K562 (cell line): ENCODE measurements at regions of chr2 and their contacts with region 1.

Region 1: DNA sequence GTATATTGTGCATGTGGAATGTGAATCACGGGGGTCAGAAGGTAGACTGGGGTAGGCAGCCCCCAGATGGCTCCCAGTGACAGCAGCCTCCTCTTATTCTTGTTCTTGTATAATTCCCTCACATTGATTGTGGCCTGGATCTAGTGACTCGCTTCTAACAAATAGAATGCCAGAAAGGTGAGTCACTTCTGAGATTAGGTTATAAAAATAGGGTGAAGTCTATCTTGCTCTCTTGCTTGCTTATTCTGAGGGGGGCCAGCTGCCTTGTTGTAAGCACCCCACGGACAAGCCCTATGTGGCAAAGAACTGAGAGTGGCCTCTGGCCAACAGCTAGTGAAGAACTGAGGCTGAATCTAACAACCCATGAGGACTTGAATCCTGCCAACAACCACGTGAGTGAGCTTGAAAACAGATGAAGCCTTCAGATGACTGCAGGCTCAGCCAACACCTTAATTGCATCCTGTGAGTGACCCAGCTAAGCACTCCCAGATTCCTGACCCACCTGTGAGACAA is 15.6 kb upstream of the RMND5A start:
- DNase-seq: no peak
- ATAC-seq: no peak
- H3K4me3 ChIP-seq: no peak overlapping the region
- H3K27ac ChIP-seq: no peak overlapping the region
- H3K4me1 ChIP-seq: peaks cover 0 to 7% of the 10 kb centered on the region in 2 experiments; a peak in 1 of 5 replicates
- H3K27me3 ChIP-seq: peaks cover 5% of the 10 kb centered on the region in 2 experiments; a peak in 4 of 5 replicates
- CTCF ChIP-seq: no peak
- EP300 ChIP-seq: no peak
- POLR2A ChIP-seq: no peak
- RAD21 ChIP-seq: no peak

Region 2: DNA sequence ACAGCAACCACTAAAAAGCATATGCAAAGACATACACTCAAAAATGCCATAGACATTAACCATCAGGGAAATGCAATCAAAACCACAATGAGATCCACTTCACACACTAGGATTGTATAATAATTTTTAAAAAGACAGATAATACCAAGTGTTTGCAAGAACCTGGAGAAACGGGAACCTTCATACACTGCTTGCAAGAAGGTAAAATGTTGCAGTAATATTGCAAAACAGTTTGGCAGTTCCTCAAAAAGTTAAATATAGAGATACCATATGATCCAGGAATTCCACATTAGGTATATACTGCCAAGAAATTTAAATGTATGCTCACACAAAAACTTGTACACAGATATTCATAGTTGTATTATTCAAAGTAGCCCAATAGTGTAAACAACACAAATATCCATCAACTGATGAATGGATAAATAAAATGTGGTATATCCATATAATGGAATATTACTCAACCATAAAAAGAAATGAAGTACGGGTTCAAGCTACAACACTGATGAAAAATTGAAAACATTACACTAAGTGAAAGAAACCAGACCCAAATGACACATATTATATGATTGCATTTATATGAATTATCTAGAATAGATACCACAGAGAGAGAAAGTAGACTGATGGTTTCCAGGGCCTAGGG is 126.6 kb before region 1 on chr2:
- CTCF ChIA-PET with region 1: no interaction called
- POLR2A ChIA-PET with region 1: no interaction called
- in situ Hi-C with region 1: no loop called
- intact Hi-C with region 1: no loop called
- DNase-seq: no peak
- ATAC-seq: no peak
- H3K4me3 ChIP-seq: no peak overlapping the region
- H3K27ac ChIP-seq: no peak overlapping the region
- H3K4me1 ChIP-seq: no peaks in the 10 kb centered on the region
- H3K27me3 ChIP-seq: no peaks in the 10 kb centered on the region
- CTCF ChIP-seq: no peak
- EP300 ChIP-seq: no peak
- POLR2A ChIP-seq: no peak
- RAD21 ChIP-seq: no peak

Region 3: GRCh38 chr2:86623651-86624541 is 80.6 kb before region 1 on chr2 and contains the start of gene RNF103:
- CTCF ChIA-PET with region 1: no interaction called
- POLR2A ChIA-PET with region 1: no interaction called
- in situ Hi-C with region 1: loop called (anchors 5 kb)
- intact Hi-C with region 1: no loop called
- DNase-seq: peak; percentile 91 to 94 (median 91)
- ATAC-seq: peak; percentile 94
- H3K4me3 ChIP-seq: peak within 1 kb of the TSS; percentile 61
- H3K27ac ChIP-seq: peak within 1 kb of the TSS; percentile 85
- H3K4me1 ChIP-seq: peaks cover 4 to 13% of the 10 kb centered on the region in 2 experiments; a peak in 4 of 5 replicates
- H3K27me3 ChIP-seq: no peaks in the 10 kb centered on the region
- CTCF ChIP-seq: no peak
- EP300 ChIP-seq: no peak
- POLR2A ChIP-seq: peak; percentile 78
- RAD21 ChIP-seq: 0 out of 4 replicates have a peak, but pooled peaks of 1 of the 2 experiments have one; percentile 10
- polyA plus RNA-seq, gene RNF103: 1.2 to 1.4 TPM

Region 4: DNA sequence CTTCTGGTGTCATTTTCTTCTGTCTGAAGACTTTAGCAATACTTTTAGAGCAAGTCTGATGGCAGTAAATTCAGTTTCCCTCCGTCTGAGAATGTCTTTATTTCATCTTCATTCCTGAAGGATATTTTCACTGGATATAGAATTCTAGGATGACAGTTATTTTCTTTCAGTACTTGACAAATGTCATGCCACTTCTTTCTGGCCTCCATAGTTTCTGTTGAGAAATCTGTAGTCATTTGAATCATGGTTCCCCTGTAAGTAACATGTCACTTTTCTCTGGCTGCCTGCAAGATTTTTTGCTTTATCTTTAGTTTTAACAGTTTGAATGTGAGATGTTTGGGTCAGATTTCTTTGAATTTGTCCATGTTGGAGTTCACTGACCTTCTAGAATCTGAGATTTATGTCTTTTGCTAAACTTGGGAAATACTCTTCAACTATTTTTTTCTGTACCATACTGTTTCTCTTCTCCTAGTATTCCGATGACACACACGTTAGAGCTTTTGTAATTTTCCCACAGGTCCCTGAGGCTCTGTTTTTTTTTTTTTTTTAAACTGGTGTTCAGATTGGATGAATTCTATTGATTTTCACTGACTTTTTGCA is 45.8 kb after region 1 on chr2:
- CTCF ChIA-PET with region 1: no interaction called
- POLR2A ChIA-PET with region 1: no interaction called
- in situ Hi-C with region 1: loop called (anchors 10 kb)
- intact Hi-C with region 1: no loop called
- DNase-seq: no peak
- ATAC-seq: no peak
- H3K4me3 ChIP-seq: no peak overlapping the region
- H3K27ac ChIP-seq: no peak overlapping the region
- H3K4me1 ChIP-seq: peaks cover 0 to 7% of the 10 kb centered on the region in 2 experiments; a peak in 2 of 5 replicates
- H3K27me3 ChIP-seq: no peaks in the 10 kb centered on the region
- CTCF ChIP-seq: no peak
- EP300 ChIP-seq: no peak
- POLR2A ChIP-seq: no peak
- RAD21 ChIP-seq: no peak

Region 5: GRCh38 chr2:86808315-86809161 is 104.0 kb after region 1 on chr2:
- CTCF ChIA-PET with region 1: no interaction called
- POLR2A ChIA-PET with region 1: no interaction called
- in situ Hi-C with region 1: no loop called
- intact Hi-C with region 1: no loop called
- DNase-seq: peak; percentile 88 to 92 (median 90)
- ATAC-seq: peak; percentile 99
- H3K4me3 ChIP-seq: no peak overlapping the region
- H3K27ac ChIP-seq: no peak overlapping the region
- H3K4me1 ChIP-seq: peaks cover 3 to 19% of the 10 kb centered on the region in 2 experiments; a peak in 3 of 5 replicates
- H3K27me3 ChIP-seq: peaks cover 4 to 31% of the 10 kb centered on the region in 2 experiments; a peak in 4 of 5 replicates
- CTCF ChIP-seq: peak; percentile 88 to 95 (median 89)
- EP300 ChIP-seq: no peak
- POLR2A ChIP-seq: no peak
- RAD21 ChIP-seq: peak; percentile 87 to 96